Left ventricle myocardium inferior (tissue), 1 donor: ENCODE measurements at regions of chr7 and their contacts with region 1.

Region 1: DNA sequence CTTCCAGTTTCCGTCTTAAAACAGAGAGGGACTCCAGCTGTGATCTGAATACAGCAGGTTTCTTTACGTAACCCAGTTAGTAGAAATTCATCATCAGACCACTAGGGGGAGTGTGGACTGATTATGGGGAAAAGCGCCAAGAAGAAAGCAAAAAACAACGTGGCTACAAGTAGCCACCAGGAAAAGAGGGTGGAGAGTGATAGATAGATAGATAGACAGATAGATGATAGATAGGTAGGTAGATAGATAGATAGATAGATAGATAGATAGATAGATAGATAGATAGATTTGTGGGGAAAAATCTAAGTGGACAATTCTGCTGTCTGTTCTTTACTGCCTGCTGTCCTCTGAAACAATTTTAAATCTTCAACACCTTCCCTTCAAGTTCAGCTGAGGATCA is 12.7 kb upstream of the AKR1B10 start:
- DNase-seq: no peak
- H3K4me3 ChIP-seq: no peak overlapping the region
- H3K27ac ChIP-seq: no peak overlapping the region
- H3K4me1 ChIP-seq: peaks cover 9% of the 10 kb centered on the region
- H3K27me3 ChIP-seq: peaks cover 2% of the 10 kb centered on the region
- CTCF ChIP-seq: peak; percentile 82

Region 2: GRCh38 chr7:134403677-134404076 is 111.0 kb before region 1 on chr7:
- intact Hi-C with region 1: no loop called
- DNase-seq: no peak
- H3K4me3 ChIP-seq: no peak overlapping the region
- H3K27ac ChIP-seq: no peak overlapping the region
- H3K4me1 ChIP-seq: no peaks in the 10 kb centered on the region
- H3K27me3 ChIP-seq: peaks cover 45% of the 10 kb centered on the region
- CTCF ChIP-seq: no peak

Region 3: GRCh38 chr7:134432296-134433152 is 82.1 kb before region 1 on chr7:
- intact Hi-C with region 1: loop called (anchors 2 kb)
- DNase-seq: peak; percentile 85
- H3K4me3 ChIP-seq: peak overlapping the region; percentile 62
- H3K27ac ChIP-seq: peak overlapping the region; percentile 88
- H3K4me1 ChIP-seq: peaks cover 15% of the 10 kb centered on the region
- H3K27me3 ChIP-seq: no peaks in the 10 kb centered on the region
- CTCF ChIP-seq: peak; percentile 81

Region 4: GRCh38 chr7:134605973-134606923 is 91.6 kb after region 1 on chr7:
- intact Hi-C with region 1: loop called (anchors 5 kb)
- DNase-seq: peak; percentile 51
- H3K4me3 ChIP-seq: peak overlapping the region; percentile 10
- H3K27ac ChIP-seq: no peak overlapping the region
- H3K4me1 ChIP-seq: peaks cover 11% of the 10 kb centered on the region
- H3K27me3 ChIP-seq: no peaks in the 10 kb centered on the region
- CTCF ChIP-seq: peak; percentile 97